Calu3 (cell line): ENCODE measurements at regions of chr3 and their contacts with region 1.

Region 1: GRCh38 chr3:107329088-107329487 is 48.2 kb upstream of the CCDC54 start:
- DNase-seq: no peak
- H3K4me3 Mint-ChIP-seq: no peak overlapping the region
- H3K27ac Mint-ChIP-seq: no peak overlapping the region
- H3K4me1 Mint-ChIP-seq: no peaks in the 10 kb centered on the region
- H3K27me3 Mint-ChIP-seq: no peaks in the 10 kb centered on the region
- CTCF ChIP-seq: no peak

Region 2: GRCh38 chr3:107055181-107055942 is 273.7 kb before region 1 on chr3:
- CTCF ChIA-PET with region 1: no interaction called
- intact Hi-C with region 1: no loop called
- DNase-seq: no peak
- H3K4me3 Mint-ChIP-seq: no peak overlapping the region
- H3K27ac Mint-ChIP-seq: no peak overlapping the region
- H3K4me1 Mint-ChIP-seq: no peaks in the 10 kb centered on the region
- H3K27me3 Mint-ChIP-seq: no peaks in the 10 kb centered on the region
- CTCF ChIP-seq: no peak

Region 3: DNA sequence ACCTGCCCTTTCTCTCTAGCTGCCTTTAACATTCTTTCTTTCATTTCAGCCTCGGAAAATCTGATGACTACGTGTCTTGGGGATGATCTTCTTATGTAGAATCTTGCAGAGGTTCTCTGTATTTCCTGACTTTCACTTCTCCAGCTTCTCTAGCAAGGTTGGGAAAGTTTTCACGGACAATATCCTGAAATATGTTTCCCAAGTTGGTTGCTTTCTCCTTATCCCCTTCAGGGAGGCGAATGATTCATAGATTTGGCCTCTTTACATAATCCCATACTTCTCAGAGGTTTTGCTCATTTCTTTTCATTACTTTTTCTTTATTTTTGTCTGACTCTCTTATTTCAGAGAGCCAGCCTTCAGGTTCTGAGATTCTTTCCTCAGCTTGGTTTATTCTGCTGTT is 13.9 kb before region 1 on chr3:
- CTCF ChIA-PET with region 1: interaction called, 3 read pairs
- intact Hi-C with region 1: loop called (anchors 1 kb)
- DNase-seq: no peak
- H3K4me3 Mint-ChIP-seq: no peak overlapping the region
- H3K27ac Mint-ChIP-seq: no peak overlapping the region
- H3K4me1 Mint-ChIP-seq: no peaks in the 10 kb centered on the region
- H3K27me3 Mint-ChIP-seq: no peaks in the 10 kb centered on the region
- CTCF ChIP-seq: no peak